T-cell (primary cell): ENCODE measurements at regions of chr6 and their contacts with region 1.

Region 1: DNA sequence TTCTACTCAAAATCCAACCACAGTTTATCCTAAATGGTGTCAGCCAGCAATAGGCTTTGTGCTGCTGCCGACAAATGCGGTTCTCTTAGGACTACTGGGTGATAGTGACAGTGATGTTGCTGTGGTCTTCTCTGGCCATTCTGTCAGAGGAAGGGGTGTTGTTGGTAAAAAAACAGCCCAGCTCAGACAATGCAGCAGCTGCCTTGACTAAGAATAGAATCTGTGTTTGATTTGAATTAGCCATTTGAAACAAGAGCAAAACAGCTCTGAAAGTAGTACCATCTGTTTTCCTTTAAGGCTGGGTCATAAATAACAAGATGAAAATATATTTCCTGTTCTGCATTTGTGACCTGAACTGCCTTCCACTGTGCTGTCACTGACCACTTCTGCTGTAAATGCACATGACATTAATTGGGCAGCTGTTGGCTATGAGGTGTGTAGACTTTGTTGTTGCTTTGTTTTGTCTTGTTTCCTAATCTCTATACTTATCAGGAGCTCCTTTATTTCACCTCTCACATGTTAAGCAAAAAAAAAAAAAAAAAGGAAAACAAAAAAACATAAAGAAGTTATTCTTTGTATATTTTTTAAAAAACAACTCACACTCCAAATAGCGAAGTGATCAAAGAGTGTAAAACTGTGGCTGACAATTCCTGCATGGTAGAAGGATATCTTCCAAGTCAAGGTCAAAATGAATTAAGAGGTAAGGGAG is 497.8 kb upstream of the ARID1B start:
- DNase-seq: no peak
- ATAC-seq: no peak
- H3K4me3 ChIP-seq: no peak overlapping the region
- H3K4me3 Mint-ChIP-seq: no peak overlapping the region
- H3K27ac ChIP-seq: no peak overlapping the region
- H3K27ac Mint-ChIP-seq: no peak overlapping the region
- H3K4me1 ChIP-seq: no peaks in the 10 kb centered on the region
- H3K4me1 Mint-ChIP-seq: peaks cover 0 to 5% (median 0%) of the 10 kb centered on the region in 3 donors
- H3K27me3 ChIP-seq: no peaks in the 10 kb centered on the region
- H3K27me3 Mint-ChIP-seq: peaks cover 3 to 8% of the 10 kb centered on the region in 2 donors

Region 2: GRCh38 chr6:156313037-156313436 is 33.6 kb after region 1 on chr6:
- CTCF ChIA-PET with region 1: no interaction called
- POLR2A ChIA-PET with region 1: interaction called in 1 of 2 experiments, 14 read pairs
- DNase-seq: no peak
- ATAC-seq: no peak
- H3K4me3 ChIP-seq: no peak overlapping the region
- H3K4me3 Mint-ChIP-seq: no peak overlapping the region
- H3K27ac ChIP-seq: no peak overlapping the region
- H3K27ac Mint-ChIP-seq: no peak overlapping the region
- H3K4me1 ChIP-seq: no peaks in the 10 kb centered on the region
- H3K4me1 Mint-ChIP-seq: no peaks in the 10 kb centered on the region
- H3K27me3 ChIP-seq: no peaks in the 10 kb centered on the region
- H3K27me3 Mint-ChIP-seq: no peaks in the 10 kb centered on the region